ENCODE measurements at regions of chr6 and their contacts with region 1.

Region 1: DNA sequence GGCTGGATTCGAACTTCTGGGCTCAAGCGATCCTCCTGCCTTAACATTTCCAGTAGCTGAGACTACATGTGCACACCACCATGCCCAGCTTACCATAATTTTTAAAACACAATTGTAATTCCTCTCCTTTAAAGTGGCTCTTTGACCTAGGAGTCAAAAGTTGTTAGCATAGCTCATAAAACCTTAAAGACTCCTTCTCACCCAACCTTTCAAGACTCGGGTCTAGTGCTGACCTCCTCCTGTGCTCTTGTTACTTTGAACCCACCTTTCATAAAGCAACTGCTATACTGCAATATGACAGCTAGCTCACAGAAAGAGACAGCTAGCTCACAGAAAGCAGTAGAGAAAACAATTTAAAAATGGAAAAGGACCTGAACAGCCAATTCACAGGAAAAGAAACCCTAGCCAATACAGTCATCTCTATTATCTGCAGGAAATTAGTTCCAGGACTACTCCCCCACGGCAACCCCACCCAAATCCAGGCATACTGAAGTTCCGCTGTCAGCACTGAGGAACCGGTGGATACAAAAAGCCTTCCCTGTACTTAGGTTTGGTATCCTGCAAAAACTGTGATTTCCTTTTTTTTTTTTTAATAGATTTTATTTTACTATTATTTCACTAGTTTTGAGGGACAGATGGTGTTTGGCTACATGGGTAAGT is 20.3 kb downstream of the SSR1 start:
- DNase-seq: no peak
- H3K4me3 ChIP-seq: no peak overlapping the region
- H3K27ac ChIP-seq: peak overlapping the region; percentile 67
- H3K4me1 ChIP-seq: peaks cover 9% of the 10 kb centered on the region
- H3K27me3 ChIP-seq: no peaks in the 10 kb centered on the region
- CTCF ChIP-seq: no peak

Region 2: GRCh38 chr6:7389451-7390225 is 96.9 kb after region 1 on chr6 and contains the starts of genes CAGE1 and RIOK1:
- intact Hi-C with region 1: loop called (anchors 10 kb)
- DNase-seq: peak; percentile 97
- H3K4me3 ChIP-seq: peak within 1 kb of the TSS; percentile 81
- H3K27ac ChIP-seq: peak within 1 kb of the TSS; percentile 92
- H3K4me1 ChIP-seq: peaks cover 34% of the 10 kb centered on the region
- H3K27me3 ChIP-seq: no peaks in the 10 kb centered on the region
- CTCF ChIP-seq: peak; percentile 30
- total RNA-seq, gene CAGE1: not detected
- total RNA-seq, gene RIOK1: 11.5 TPM

Measured in left ventricle myocardium inferior (tissue), 1 donor.